ENCODE measurements at regions of chr2 and their contacts with region 1.

Region 1: GRCh38 chr2:68157402-68158133 is at the start of gene PNO1:
- DNase-seq: peak; percentile 98 to 99
- ATAC-seq: peak; percentile 93 to 99 (median 95)
- H3K4me3 ChIP-seq: peak within 1 kb of the TSS; percentile 96
- H3K4me3 Mint-ChIP-seq: peak within 1 kb of the TSS; percentile 100
- H3K27ac ChIP-seq: peak within 1 kb of the TSS; percentile 97
- H3K27ac Mint-ChIP-seq: peak within 1 kb of the TSS; percentile 96 to 100
- H3K4me1 ChIP-seq: peaks cover 8% of the 10 kb centered on the region
- H3K4me1 Mint-ChIP-seq: peaks cover 33 to 34% of the 10 kb centered on the region in 2 donors
- H3K27me3 ChIP-seq: no peaks in the 10 kb centered on the region
- H3K27me3 Mint-ChIP-seq: no peaks in the 10 kb centered on the region
- CTCF ChIP-seq: no peak
- total RNA-seq, gene PNO1: 19.4 to 25.1 (median 25.0) TPM

Region 2: DNA sequence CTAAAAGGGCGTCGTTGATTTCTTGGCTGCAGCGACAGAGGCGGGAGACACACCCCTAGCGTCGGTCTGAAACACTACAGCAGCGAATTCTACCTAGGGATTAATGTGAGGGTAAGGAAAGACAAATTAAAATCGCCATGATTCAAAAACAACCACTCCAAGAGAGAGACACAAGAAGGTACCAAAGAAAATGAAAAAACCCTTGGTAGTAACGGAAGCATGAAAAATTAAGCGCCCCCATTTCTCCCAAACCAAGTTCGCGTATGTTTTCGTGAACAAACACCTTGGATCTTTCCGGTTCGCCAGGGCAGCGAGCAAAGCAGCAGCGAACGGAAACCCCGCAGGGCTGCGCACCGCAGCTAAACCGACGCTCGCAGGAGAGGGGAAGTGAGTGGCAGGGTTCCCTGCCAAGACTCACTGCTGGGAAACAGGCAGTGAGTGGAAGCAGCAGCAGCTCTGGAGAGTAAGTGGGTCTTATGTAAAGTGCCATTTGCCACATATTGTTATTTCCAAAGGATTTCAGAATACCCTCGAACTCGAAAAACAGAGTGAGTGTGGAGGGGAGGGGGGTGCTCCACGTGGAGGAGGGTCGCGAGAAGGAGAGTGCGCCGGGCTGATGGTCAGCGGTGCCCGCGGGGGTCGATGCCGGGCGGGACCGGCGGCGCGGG is 93.8 kb after region 1 on chr2:
- intact Hi-C with region 1: loop called (anchors 1 kb)
- DNase-seq: peak; percentile 62 to 93
- ATAC-seq: peak; percentile 65 to 79 (median 66)
- H3K4me3 ChIP-seq: peak overlapping the region; percentile 80
- H3K4me3 Mint-ChIP-seq: peak overlapping the region; percentile 94
- H3K27ac ChIP-seq: peak overlapping the region; percentile 95
- H3K27ac Mint-ChIP-seq: peak overlapping the region in 1 of 2 donors; percentile 97
- H3K4me1 ChIP-seq: peaks cover 15% of the 10 kb centered on the region
- H3K4me1 Mint-ChIP-seq: peaks cover 28 to 41% of the 10 kb centered on the region in 2 donors
- H3K27me3 ChIP-seq: no peaks in the 10 kb centered on the region
- H3K27me3 Mint-ChIP-seq: peaks cover 0 to 3% of the 10 kb centered on the region in 2 donors
- CTCF ChIP-seq: peak; percentile 69

Measured in natural killer cell (primary cell).